ENCODE measurements at regions of chr9 and their contacts with region 1.

Region 1: DNA sequence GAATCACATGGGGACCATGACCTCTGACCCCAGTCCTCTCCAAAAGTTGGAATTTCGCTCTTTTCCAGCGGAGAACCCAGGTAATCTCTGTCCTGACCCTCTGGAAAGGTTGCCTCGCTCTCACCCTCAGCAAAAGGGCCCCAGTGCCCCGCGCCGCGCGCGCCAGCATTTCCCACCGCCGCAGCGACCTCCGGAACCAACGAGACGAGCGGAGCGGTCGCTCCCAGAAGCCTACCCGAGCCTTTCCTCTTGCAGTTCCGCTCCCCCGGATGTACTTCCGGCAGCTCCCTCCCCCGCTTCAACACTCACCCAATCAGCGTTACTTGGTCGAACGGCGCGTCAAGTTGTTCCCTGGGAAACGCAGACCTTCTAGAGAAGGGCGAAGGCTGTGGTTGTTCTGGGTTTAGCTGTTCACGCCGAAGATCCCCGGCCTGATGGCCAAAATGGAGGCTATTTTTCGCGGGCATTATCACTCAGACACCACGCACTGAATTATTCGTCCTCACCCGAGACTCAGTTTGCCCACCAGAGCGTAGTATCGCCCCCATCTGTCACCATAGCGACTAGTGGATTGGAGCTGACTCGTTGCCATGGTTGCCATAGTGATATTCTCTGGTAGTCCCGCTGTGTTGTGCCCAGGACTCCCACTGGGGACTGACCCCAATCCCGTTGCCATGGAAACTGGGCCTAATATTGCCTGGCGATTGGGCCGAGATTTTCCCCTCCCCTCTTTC is at the start of gene STOML2:
- DNase-seq: peak; percentile 97
- H3K4me3 ChIP-seq: peak within 1 kb of the TSS; percentile 62 to 92 (median 68)
- H3K27ac ChIP-seq: peak within 1 kb of the TSS; percentile 81 to 91 (median 88)
- H3K4me1 ChIP-seq: peaks cover 21 to 33% (median 27%) of the 10 kb centered on the region in 4 donors
- H3K27me3 ChIP-seq: no peaks in the 10 kb centered on the region
- CTCF ChIP-seq: peak in 1 of 3 experiments; percentile 29
- EP300 ChIP-seq: no peak
- POLR2A ChIP-seq: no peak
- total RNA-seq, gene STOML2: 108 to 130 (median 123) TPM

Region 2: DNA sequence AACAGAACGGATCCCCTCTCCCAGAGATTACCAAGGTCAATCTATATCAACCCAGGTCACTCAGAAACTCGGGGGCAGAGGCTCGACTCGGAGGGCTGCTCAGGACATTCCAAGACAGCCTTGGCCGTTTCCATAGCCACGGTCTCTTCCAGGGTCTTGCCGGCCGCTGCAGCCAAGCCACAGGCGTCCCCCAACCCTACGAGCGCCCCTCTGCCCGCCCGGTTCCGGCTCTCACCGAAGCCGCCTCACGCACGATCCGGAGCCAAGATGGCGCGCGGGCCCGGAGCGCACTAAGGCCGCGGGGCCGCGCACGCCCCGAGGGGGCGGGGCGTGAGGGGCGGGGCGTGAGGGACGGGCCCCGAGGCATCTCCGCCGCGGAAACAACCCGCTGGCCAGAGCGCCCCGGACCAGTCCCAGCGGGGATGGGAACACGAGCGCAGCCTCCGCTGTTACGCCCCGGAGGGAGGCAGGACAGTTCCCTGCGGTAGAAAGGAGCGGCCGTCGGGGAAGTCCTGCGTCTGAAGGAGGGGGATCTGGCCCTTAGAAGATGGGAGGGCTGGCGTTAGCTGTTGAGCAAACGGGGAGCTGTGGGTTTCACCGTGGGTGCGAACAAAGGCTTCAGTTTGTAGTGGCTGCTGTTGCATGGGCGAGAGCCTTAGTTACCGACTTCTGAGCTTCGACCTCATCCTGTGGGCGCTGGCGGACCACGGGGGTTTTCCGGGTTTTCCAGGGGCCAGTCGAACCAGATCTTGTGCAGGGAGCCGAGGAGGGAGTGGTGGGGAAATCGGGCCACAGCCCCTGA is 491.1 kb before region 1 on chr9 and contains the start of gene RPP25L:
- intact Hi-C with region 1: no loop called
- DNase-seq: no peak
- H3K4me3 ChIP-seq: peak within 1 kb of the TSS; percentile 71 to 74 (median 72)
- H3K27ac ChIP-seq: peak within 1 kb of the TSS; percentile 84 to 87 (median 85)
- H3K4me1 ChIP-seq: peaks cover 18 to 29% (median 27%) of the 10 kb centered on the region in 4 donors
- H3K27me3 ChIP-seq: no peaks in the 10 kb centered on the region
- CTCF ChIP-seq: no peak
- EP300 ChIP-seq: no peak
- POLR2A ChIP-seq: peak; percentile 61
- total RNA-seq, gene RPP25L: 11.6 to 26.7 (median 20.2) TPM

Region 3: DNA sequence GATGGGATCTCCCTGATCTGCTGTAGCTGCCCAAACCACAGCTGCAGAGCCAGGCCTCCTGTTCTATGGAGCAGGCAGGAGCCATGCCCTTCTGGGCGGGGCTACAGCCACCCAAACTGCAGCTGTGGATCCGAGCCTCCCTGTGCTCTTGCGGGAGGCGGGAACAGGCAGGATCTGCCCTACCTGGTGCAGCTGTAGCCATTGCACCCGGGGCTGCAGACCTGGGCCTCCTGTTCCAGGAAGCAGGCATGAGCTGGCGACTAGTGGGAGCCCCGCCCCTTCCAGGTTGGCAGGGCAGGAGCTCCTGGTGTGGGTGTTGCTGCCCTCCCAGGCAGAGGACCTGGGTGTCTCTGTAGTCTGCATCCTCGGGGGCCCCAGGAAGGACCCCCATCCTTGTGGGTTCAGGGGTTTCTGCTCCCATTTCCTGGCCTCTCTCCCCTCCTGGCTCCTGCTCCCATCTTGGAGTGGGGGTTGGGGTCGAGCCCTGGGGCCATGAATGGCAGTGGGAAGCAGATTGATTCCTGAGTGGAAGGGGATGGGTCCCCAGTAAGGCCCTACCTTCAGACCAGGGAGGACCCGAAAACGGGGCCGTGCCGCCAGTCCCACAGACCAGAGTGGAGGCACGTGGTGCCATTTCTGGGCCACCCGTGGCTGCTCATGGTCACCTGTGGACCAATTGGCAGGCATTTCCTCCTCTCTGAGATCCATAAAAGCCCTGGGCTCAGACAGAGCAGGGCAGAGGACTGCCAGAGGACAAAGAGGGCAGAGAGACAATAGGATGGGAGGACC is 35.8 kb after region 1 on chr9:
- intact Hi-C with region 1: no loop called
- DNase-seq: no peak
- H3K4me3 ChIP-seq: no peak overlapping the region
- H3K27ac ChIP-seq: no peak overlapping the region
- H3K4me1 ChIP-seq: peaks cover 0 to under 1% (median 0%) of the 10 kb centered on the region in 4 donors
- H3K27me3 ChIP-seq: no peaks in the 10 kb centered on the region
- CTCF ChIP-seq: no peak
- EP300 ChIP-seq: no peak
- POLR2A ChIP-seq: no peak

Region 4: GRCh38 chr9:35481347-35481975 is 378.4 kb after region 1 on chr9:
- intact Hi-C with region 1: loop called (anchors 5 kb)
- DNase-seq: no peak
- H3K4me3 ChIP-seq: no peak overlapping the region
- H3K27ac ChIP-seq: no peak overlapping the region
- H3K4me1 ChIP-seq: peaks cover 4 to 14% (median 6%) of the 10 kb centered on the region in 4 donors
- H3K27me3 ChIP-seq: no peaks in the 10 kb centered on the region
- CTCF ChIP-seq: peak; percentile 72 to 88 (median 86)
- EP300 ChIP-seq: no peak
- POLR2A ChIP-seq: no peak

Measured in esophagus muscularis mucosa (tissue), 4 donors.